Natural killer cell (primary cell): ENCODE measurements at regions of chr14 and their contacts with region 1.

Region 1: DNA sequence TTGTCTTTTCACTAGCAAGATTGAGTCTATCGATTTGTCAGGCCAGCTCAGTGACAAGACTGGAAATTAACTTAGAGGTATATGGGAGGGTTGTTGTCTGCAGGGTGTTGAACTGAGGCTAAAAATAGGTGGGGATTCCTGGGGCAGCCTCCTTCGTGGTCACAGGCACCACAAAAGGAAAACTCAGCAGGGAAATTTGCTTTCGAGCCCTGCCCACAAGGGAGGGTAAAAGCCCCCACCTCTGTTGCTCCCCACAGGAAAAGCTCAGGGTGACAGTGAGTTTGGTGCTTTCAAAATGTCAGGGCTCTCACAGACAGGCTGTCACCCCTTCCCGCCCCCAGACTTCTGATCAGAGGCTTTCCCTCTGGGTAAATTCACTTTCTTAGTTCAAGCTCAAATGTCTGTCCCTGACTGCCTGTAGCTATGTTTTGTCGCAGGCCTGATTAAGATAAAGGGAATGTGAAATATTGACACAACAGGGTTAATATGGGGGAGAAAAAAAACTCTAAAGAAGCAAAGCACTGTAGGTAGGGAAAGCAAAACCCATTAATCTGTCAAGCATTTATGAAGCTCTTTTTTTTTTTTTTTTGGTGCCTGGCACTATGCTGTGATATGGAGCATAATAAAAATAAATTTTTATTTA is 11.7 kb upstream of the NFKBIA start:
- DNase-seq: peak; percentile 52 to 90
- ATAC-seq: peak; percentile 52 to 65 (median 57)
- H3K4me3 ChIP-seq: no peak overlapping the region
- H3K4me3 Mint-ChIP-seq: peak overlapping the region; percentile 65
- H3K27ac ChIP-seq: peak overlapping the region; percentile 92
- H3K27ac Mint-ChIP-seq: peak overlapping the region; percentile 88 to 91
- H3K4me1 ChIP-seq: peaks cover 50% of the 10 kb centered on the region
- H3K4me1 Mint-ChIP-seq: peaks cover 51 to 53% of the 10 kb centered on the region in 2 donors
- H3K27me3 ChIP-seq: no peaks in the 10 kb centered on the region
- H3K27me3 Mint-ChIP-seq: no peaks in the 10 kb centered on the region
- CTCF ChIP-seq: no peak

Region 2: GRCh38 chr14:34671716-34672115 is 744.5 kb before region 1 on chr14:
- intact Hi-C with region 1: loop called (anchors 5 kb)
- DNase-seq: no peak
- ATAC-seq: no peak
- H3K4me3 ChIP-seq: no peak overlapping the region
- H3K4me3 Mint-ChIP-seq: no peak overlapping the region
- H3K27ac ChIP-seq: no peak overlapping the region
- H3K27ac Mint-ChIP-seq: no peak overlapping the region
- H3K4me1 ChIP-seq: no peaks in the 10 kb centered on the region
- H3K4me1 Mint-ChIP-seq: no peaks in the 10 kb centered on the region
- H3K27me3 ChIP-seq: no peaks in the 10 kb centered on the region
- H3K27me3 Mint-ChIP-seq: no peaks in the 10 kb centered on the region
- CTCF ChIP-seq: no peak

Region 3: GRCh38 chr14:34982417-34983147 is 433.6 kb before region 1 on chr14 and contains the start of gene SRP54:
- intact Hi-C with region 1: loop called (anchors 2 kb)
- DNase-seq: peak; percentile 99 to 100
- ATAC-seq: peak; percentile 89 to 98 (median 89)
- H3K4me3 ChIP-seq: peak within 1 kb of the TSS; percentile 74
- H3K4me3 Mint-ChIP-seq: no peak within 1 kb of the TSS
- H3K27ac ChIP-seq: peak within 1 kb of the TSS; percentile 94
- H3K27ac Mint-ChIP-seq: no peak within 1 kb of the TSS
- H3K4me1 ChIP-seq: peaks cover 20% of the 10 kb centered on the region
- H3K4me1 Mint-ChIP-seq: peaks cover 0 to 6% of the 10 kb centered on the region in 2 donors
- H3K27me3 ChIP-seq: no peaks in the 10 kb centered on the region
- H3K27me3 Mint-ChIP-seq: no peaks in the 10 kb centered on the region
- CTCF ChIP-seq: no peak
- total RNA-seq, gene SRP54: 41.2 to 63.2 (median 48.8) TPM

Region 4: GRCh38 chr14:35088514-35088913 is 327.7 kb before region 1 on chr14:
- intact Hi-C with region 1: no loop called
- DNase-seq: no peak
- ATAC-seq: no peak
- H3K4me3 ChIP-seq: no peak overlapping the region
- H3K4me3 Mint-ChIP-seq: no peak overlapping the region
- H3K27ac ChIP-seq: no peak overlapping the region
- H3K27ac Mint-ChIP-seq: peak overlapping the region; percentile 7 to 50
- H3K4me1 ChIP-seq: no peaks in the 10 kb centered on the region
- H3K4me1 Mint-ChIP-seq: no peaks in the 10 kb centered on the region
- H3K27me3 ChIP-seq: no peaks in the 10 kb centered on the region
- H3K27me3 Mint-ChIP-seq: no peaks in the 10 kb centered on the region
- CTCF ChIP-seq: no peak

Region 5: GRCh38 chr14:35121887-35122695 is 294.1 kb before region 1 on chr14 and contains the starts of genes PPP2R3C and PRORP:
- intact Hi-C with region 1: loop called (anchors 5 kb)
- DNase-seq: peak; percentile 81 to 96
- ATAC-seq: peak; percentile 83 to 94 (median 85)
- H3K4me3 ChIP-seq: peak within 1 kb of the TSS; percentile 72
- H3K4me3 Mint-ChIP-seq: peak within 1 kb of the TSS; percentile 97
- H3K27ac ChIP-seq: peak within 1 kb of the TSS; percentile 96
- H3K27ac Mint-ChIP-seq: peak within 1 kb of the TSS; percentile 99
- H3K4me1 ChIP-seq: peaks cover 33% of the 10 kb centered on the region
- H3K4me1 Mint-ChIP-seq: peaks cover 56 to 60% of the 10 kb centered on the region in 2 donors
- H3K27me3 ChIP-seq: no peaks in the 10 kb centered on the region
- H3K27me3 Mint-ChIP-seq: no peaks in the 10 kb centered on the region
- CTCF ChIP-seq: no peak
- total RNA-seq, gene PPP2R3C: 41.5 to 49.7 (median 48.3) TPM
- total RNA-seq, gene PRORP: 18.3 to 35.8 (median 20.5) TPM

Region 6: GRCh38 chr14:35201066-35201465 is 215.2 kb before region 1 on chr14:
- intact Hi-C with region 1: loop called (anchors 2 kb)
- DNase-seq: peak in 1 of 2 donors; percentile 41
- ATAC-seq: no peak
- H3K4me3 ChIP-seq: no peak overlapping the region
- H3K4me3 Mint-ChIP-seq: peak overlapping the region; percentile 25
- H3K27ac ChIP-seq: no peak overlapping the region
- H3K27ac Mint-ChIP-seq: peak overlapping the region; percentile 60 to 64
- H3K4me1 ChIP-seq: peaks cover 24% of the 10 kb centered on the region
- H3K4me1 Mint-ChIP-seq: peaks cover 38 to 39% of the 10 kb centered on the region in 2 donors
- H3K27me3 ChIP-seq: no peaks in the 10 kb centered on the region
- H3K27me3 Mint-ChIP-seq: no peaks in the 10 kb centered on the region
- CTCF ChIP-seq: no peak

Region 7: DNA sequence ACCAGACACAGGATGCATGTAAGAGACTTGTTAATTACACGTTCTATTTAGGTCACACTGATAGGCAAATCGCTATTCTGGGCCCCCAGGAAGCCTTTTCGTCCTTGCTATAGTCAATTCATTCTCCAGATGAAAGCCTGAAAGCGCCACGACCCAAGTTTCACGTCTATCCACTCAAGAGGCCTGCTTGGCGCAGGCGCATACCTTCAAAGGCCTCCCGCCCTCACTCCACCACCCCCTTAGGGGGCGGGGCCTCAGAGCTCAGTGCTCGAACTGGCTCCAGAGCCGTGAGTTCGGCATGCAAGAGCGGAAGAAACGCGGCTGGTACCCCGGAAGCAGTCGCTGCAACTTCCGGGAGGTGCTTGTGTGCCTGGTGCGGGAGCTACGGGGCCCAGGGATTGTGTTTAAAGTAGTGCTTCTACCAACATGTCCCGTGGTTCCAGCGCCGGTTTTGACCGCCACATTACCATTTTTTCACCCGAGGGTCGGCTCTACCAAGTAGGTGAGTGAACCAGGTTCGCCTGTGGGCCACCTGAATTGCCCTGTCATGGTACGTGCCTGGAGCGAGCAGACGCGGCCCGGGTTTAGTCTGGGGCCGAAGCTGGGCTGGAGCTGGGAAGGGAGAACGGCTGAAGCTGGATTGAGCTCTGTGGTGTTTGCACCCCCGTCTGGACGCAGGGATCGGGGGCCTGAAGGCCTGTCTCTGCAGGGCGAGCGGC is 124.0 kb before region 1 on chr14 and contains the start of gene PSMA6:
- intact Hi-C with region 1: loop called (anchors 5 kb)
- DNase-seq: peak; percentile 96 to 100
- ATAC-seq: peak; percentile 91 to 97 (median 92)
- H3K4me3 ChIP-seq: peak within 1 kb of the TSS; percentile 63
- H3K4me3 Mint-ChIP-seq: peak within 1 kb of the TSS; percentile 97
- H3K27ac ChIP-seq: peak within 1 kb of the TSS; percentile 81
- H3K27ac Mint-ChIP-seq: peak within 1 kb of the TSS; percentile 98 to 99
- H3K4me1 ChIP-seq: peaks cover 31% of the 10 kb centered on the region
- H3K4me1 Mint-ChIP-seq: peaks cover 43 to 45% of the 10 kb centered on the region in 2 donors
- H3K27me3 ChIP-seq: no peaks in the 10 kb centered on the region
- H3K27me3 Mint-ChIP-seq: no peaks in the 10 kb centered on the region
- CTCF ChIP-seq: no peak
- total RNA-seq, gene PSMA6: 130 to 141 (median 139) TPM

Region 8: GRCh38 chr14:35404449-35405303 is 11.6 kb before region 1 on chr14 and contains the start of gene NFKBIA:
- intact Hi-C with region 1: loop called (anchors 1 kb)
- DNase-seq: peak; percentile 96 to 97
- ATAC-seq: peak; percentile 51 to 81 (median 63)
- H3K4me3 ChIP-seq: peak within 1 kb of the TSS; percentile 90
- H3K4me3 Mint-ChIP-seq: peak within 1 kb of the TSS; percentile 99
- H3K27ac ChIP-seq: peak within 1 kb of the TSS; percentile 96
- H3K27ac Mint-ChIP-seq: peak within 1 kb of the TSS; percentile 98
- H3K4me1 ChIP-seq: peaks cover 46% of the 10 kb centered on the region
- H3K4me1 Mint-ChIP-seq: peaks cover 59 to 63% of the 10 kb centered on the region in 2 donors
- H3K27me3 ChIP-seq: no peaks in the 10 kb centered on the region
- H3K27me3 Mint-ChIP-seq: no peaks in the 10 kb centered on the region
- CTCF ChIP-seq: no peak
- total RNA-seq, gene NFKBIA: 2,039 to 3,339 (median 2,499) TPM